Activated CD4-positive, alpha-beta T cell treated with anti-CD3 and anti-CD28 coated beads, Interleukin-2, amount 10 ng/mL, durations not matched to agents 24 days and 14 days (primary cell): ENCODE measurements at regions of chr1 and their contacts with region 1.

Region 1: DNA sequence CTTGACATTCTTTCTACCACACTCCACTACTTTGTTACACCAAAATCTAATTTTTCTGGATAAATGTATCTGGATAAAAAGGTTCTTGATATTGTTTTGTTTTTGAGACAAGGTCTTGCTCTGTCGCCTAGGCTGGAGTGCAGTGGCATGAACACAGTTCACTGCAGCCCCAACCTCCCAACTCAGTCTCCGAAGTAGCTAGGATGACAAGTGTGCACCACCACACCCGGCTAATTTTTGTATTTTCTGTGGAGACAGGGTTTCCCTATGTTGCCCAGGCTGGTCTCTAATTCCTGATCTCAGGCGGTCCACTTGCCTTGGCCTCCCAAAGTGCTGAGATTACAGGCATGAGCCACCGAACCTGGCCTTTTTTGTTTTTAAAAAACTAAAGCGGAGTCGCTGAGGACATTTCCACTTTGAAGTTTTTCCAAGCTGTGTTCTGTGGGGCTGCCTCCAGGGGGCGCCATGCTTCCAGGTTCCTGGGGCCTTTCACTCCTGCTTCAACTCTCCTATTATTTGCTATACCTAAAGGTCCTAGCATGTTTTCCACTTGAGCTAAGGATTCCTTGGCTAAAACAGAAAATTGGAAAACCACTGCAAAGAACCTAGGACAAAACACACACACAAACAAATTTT is 14.1 kb upstream of the NCMAP start:
- DNase-seq: peak; percentile 76
- H3K4me3 Mint-ChIP-seq: peak overlapping the region; percentile 34
- H3K27ac Mint-ChIP-seq: peak overlapping the region; percentile 28
- H3K4me1 Mint-ChIP-seq: peaks cover 43% of the 10 kb centered on the region
- H3K27me3 Mint-ChIP-seq: no peaks in the 10 kb centered on the region

Region 2: GRCh38 chr1:24186993-24187805 is 354.6 kb before region 1 on chr1 and contains the start of gene IFNLR1:
- intact Hi-C with region 1: loop called (anchors 5 kb)
- DNase-seq: peak; percentile 90
- H3K4me3 Mint-ChIP-seq: peak within 1 kb of the TSS; percentile 82
- H3K27ac Mint-ChIP-seq: peak within 1 kb of the TSS; percentile 78
- H3K4me1 Mint-ChIP-seq: peaks cover 34% of the 10 kb centered on the region
- H3K27me3 Mint-ChIP-seq: peaks cover 2% of the 10 kb centered on the region
- total RNA-seq, gene IFNLR1: 5.3 and 5.6 TPM in 2 replicates

Region 3: DNA sequence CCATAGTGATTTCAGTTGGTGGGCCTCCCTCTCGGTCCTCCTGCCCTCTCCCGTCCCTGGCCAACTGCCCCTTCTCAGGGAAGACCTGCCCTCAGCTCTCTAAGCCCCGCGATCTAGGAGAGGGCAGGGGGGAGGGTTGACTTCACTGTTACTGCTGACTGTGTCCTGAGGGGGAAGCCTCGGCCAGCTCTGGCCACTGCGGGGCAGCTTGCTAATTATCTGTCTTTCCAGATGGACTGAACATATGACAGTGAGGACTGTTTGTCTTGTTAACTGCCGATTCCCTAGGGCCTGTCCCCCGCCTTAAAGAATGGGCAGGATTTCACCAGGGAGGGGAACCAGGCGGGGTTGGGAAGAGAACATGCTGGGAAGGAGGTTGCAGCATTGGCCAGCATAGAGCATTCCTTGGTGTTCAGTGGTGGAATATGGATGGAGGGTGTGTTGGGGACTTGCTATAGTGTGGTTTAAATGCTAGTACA is 103.4 kb before region 1 on chr1:
- intact Hi-C with region 1: no loop called
- DNase-seq: no peak
- H3K4me3 Mint-ChIP-seq: no peak overlapping the region
- H3K27ac Mint-ChIP-seq: no peak overlapping the region
- H3K4me1 Mint-ChIP-seq: peaks cover 8% of the 10 kb centered on the region
- H3K27me3 Mint-ChIP-seq: no peaks in the 10 kb centered on the region

Region 4: GRCh38 chr1:24491577-24492360 is 50.1 kb before region 1 on chr1:
- intact Hi-C with region 1: loop called (anchors 2 kb)
- DNase-seq: no peak
- H3K4me3 Mint-ChIP-seq: no peak overlapping the region
- H3K27ac Mint-ChIP-seq: no peak overlapping the region
- H3K4me1 Mint-ChIP-seq: peaks cover 23% of the 10 kb centered on the region
- H3K27me3 Mint-ChIP-seq: no peaks in the 10 kb centered on the region

Region 5: GRCh38 chr1:24594154-24594553 is 52.3 kb after region 1 on chr1:
- intact Hi-C with region 1: no loop called
- DNase-seq: no peak
- H3K4me3 Mint-ChIP-seq: no peak overlapping the region
- H3K27ac Mint-ChIP-seq: no peak overlapping the region
- H3K4me1 Mint-ChIP-seq: peaks cover 2% of the 10 kb centered on the region
- H3K27me3 Mint-ChIP-seq: peaks cover 14% of the 10 kb centered on the region